CD4-positive, alpha-beta T cell (primary cell): ENCODE measurements at regions of chr11 and their contacts with region 1.

Region 1: DNA sequence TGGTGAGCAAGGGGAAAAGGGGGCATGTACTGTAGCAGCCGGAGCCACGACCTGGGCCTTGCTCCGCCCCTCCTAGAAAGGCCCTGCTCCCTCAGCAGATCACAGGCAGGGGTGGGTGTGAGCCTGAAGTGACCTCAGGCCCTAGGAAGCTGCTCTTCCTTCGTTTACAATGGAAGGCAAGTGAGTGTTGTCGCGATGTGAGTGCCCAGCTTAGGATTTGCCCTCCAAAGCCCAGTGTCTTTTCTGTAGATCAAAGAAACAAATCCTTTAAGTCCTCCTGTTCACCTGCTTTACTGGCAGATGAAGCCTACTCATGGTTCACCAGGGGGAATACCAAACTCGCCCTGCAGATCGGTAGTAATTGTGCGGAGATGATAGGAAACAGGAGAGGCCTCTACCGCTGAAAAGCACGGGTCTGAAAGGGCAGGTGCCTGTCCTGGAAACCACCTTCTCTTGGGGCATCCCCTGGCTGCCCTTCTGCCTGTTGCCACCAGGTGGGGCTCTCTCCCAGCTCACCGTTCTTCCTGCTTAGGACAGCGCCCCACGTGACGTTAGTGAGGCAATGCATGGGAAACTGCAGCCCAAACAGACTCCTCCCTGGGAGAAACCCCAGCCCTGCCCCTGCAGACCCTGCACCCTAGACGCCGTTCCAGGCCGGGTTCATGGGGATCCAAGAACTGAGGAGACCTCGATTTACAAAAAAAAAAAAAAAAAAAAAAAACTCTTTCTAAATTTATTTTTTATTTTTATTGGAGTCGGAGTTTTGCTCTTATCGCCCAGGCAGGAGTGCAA is 45.9 kb upstream of the RAB1B start:
- DNase-seq: peak; percentile 85 to 99 (median 90)
- ATAC-seq: peak; percentile 98
- H3K4me3 ChIP-seq: no peak overlapping the region
- H3K4me3 Mint-ChIP-seq: no peak overlapping the region
- H3K27ac ChIP-seq: peak overlapping the region; percentile 80 to 94
- H3K27ac Mint-ChIP-seq: peak overlapping the region; percentile 90
- H3K4me1 ChIP-seq: peaks cover 15% of the 10 kb centered on the region
- H3K4me1 Mint-ChIP-seq: peaks cover 7% of the 10 kb centered on the region
- H3K27me3 ChIP-seq: no peaks in the 10 kb centered on the region
- H3K27me3 Mint-ChIP-seq: no peaks in the 10 kb centered on the region
- CTCF ChIP-seq: peak; percentile 100

Region 2: GRCh38 chr11:66258473-66258893 is 35.9 kb after region 1 on chr11:
- CTCF ChIA-PET with region 1: interaction called, 5 read pairs
- POLR2A ChIA-PET with region 1: interaction called, 3 read pairs
- intact Hi-C with region 1: loop called in 1 of 2 experiments (anchors 1 kb)
- DNase-seq: no peak
- ATAC-seq: no peak
- H3K4me3 ChIP-seq: peak overlapping the region; percentile 97
- H3K4me3 Mint-ChIP-seq: peak overlapping the region; percentile 93
- H3K27ac ChIP-seq: peak overlapping the region; percentile 96 to 99
- H3K27ac Mint-ChIP-seq: peak overlapping the region; percentile 96
- H3K4me1 ChIP-seq: peaks cover 31% of the 10 kb centered on the region
- H3K4me1 Mint-ChIP-seq: peaks cover 30% of the 10 kb centered on the region
- H3K27me3 ChIP-seq: no peaks in the 10 kb centered on the region
- H3K27me3 Mint-ChIP-seq: no peaks in the 10 kb centered on the region
- CTCF ChIP-seq: peak; percentile 17